CD8-positive, alpha-beta T cell (primary cell): ENCODE measurements at regions of chr1 and their contacts with region 1.

Region 1: DNA sequence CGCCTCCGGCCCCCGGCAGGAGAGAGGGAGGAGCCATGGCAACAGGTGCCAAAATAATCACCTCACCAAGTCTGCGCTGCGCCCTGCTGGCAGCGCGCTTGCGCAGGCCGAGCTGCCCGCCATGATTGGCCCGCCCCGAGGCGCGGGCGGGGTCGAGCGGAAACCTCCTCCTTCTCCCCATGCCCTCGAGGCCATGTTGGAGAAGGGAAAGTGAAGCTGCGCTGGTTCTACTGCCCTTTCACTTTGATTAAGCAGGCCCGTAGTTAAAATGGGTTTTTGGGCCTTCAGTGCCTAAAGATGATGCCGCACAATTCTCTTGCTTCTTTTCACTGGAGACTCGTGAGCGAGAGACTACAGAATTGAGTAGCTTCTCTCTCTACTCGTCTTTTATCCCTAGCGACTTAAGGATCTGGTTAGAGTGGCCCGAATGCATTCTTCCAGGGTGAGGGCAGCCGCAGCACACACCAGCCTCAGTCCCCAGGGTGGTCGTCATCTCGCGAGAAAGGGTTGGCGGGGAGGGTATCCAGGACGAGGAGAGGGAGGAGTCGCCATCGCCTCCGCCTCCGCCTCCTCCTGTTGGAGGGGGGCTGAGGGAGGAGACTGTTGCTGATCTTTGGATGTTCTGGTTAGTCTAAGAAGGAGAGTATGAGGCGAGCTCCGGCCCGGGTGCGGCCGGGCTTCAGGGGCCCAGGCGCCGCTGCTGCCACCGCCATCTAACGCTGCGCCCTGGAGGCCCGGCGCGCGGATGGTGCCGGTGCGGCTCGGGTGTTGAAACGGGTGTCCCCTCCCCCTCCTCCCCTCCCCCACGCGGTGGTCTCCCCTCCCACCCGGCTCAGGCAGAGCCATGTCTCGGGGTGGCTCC is at the start of gene DCAF6:
- DNase-seq: peak; percentile 93 to 100 (median 97)
- ATAC-seq: peak; percentile 78
- H3K4me3 ChIP-seq: peak within 1 kb of the TSS; percentile 85 to 86
- H3K4me3 Mint-ChIP-seq: peak within 1 kb of the TSS; percentile 89
- H3K27ac ChIP-seq: peak within 1 kb of the TSS; percentile 91 to 96
- H3K27ac Mint-ChIP-seq: peak within 1 kb of the TSS; percentile 93
- H3K4me1 ChIP-seq: peaks cover 29% of the 10 kb centered on the region
- H3K4me1 Mint-ChIP-seq: peaks cover 54% of the 10 kb centered on the region
- H3K27me3 ChIP-seq: no peaks in the 10 kb centered on the region
- H3K27me3 Mint-ChIP-seq: no peaks in the 10 kb centered on the region
- CTCF ChIP-seq: no peak
- total RNA-seq, gene DCAF6: 12.4 to 13.0 TPM

Region 2: GRCh38 chr1:166838766-166839599 is 1097.3 kb before region 1 on chr1 and contains the start of gene POGK:
- CTCF ChIA-PET with region 1: no interaction called
- POLR2A ChIA-PET with region 1: interaction called, 6 read pairs
- intact Hi-C with region 1: loop called in 1 of 2 experiments (anchors 2 kb)
- DNase-seq: peak; percentile 56 to 92 (median 80)
- ATAC-seq: peak; percentile 88
- H3K4me3 ChIP-seq: peak within 1 kb of the TSS; percentile 68 to 72
- H3K4me3 Mint-ChIP-seq: peak within 1 kb of the TSS; percentile 92
- H3K27ac ChIP-seq: peak within 1 kb of the TSS; percentile 71 to 75
- H3K27ac Mint-ChIP-seq: peak within 1 kb of the TSS; percentile 98
- H3K4me1 ChIP-seq: peaks cover 28% of the 10 kb centered on the region
- H3K4me1 Mint-ChIP-seq: peaks cover 41% of the 10 kb centered on the region
- H3K27me3 ChIP-seq: no peaks in the 10 kb centered on the region
- H3K27me3 Mint-ChIP-seq: no peaks in the 10 kb centered on the region
- CTCF ChIP-seq: no peak
- total RNA-seq, gene POGK: 14.9 to 16.1 TPM

Region 3: DNA sequence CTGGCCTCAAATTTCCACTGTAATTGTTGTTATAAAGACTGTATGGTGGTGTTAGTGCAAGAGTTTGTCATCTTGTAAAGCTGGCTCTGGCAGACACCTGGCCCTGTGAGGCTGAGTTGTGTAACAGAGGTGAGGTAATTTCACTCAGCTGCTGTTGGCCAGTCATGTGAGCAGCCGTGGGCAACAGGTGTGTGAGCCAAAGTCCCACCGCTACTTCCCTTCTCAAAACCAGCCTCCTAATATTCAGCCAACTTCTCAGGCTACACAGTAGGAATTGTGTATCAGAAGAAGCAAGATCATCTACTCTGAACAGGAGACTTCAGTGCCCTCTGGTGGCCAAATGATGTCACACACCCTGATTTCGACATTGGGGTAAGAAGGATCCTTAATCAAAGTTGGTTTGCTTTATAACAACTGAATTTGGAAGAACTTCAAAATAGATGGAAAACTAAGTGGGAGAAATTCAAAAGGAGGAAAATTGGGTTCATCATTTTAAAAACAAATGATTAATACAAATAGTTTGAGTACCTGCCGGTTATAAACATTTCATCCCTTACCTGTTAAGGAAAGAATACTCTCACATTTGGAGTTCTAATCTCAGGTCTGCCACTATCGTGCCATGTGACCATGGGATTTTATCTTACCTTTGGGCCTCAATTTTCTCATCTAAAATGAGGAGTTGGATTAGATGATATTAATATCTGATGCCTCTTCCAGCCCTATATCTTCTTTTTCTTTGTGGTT is 380.2 kb before region 1 on chr1:
- CTCF ChIA-PET with region 1: no interaction called
- POLR2A ChIA-PET with region 1: no interaction called
- intact Hi-C with region 1: no loop called
- DNase-seq: peak; percentile 53 to 84 (median 76)
- ATAC-seq: peak; percentile 37
- H3K4me3 ChIP-seq: no peak overlapping the region
- H3K4me3 Mint-ChIP-seq: no peak overlapping the region
- H3K27ac ChIP-seq: no peak overlapping the region
- H3K27ac Mint-ChIP-seq: no peak overlapping the region
- H3K4me1 ChIP-seq: peaks cover 18% of the 10 kb centered on the region
- H3K4me1 Mint-ChIP-seq: peaks cover 32% of the 10 kb centered on the region
- H3K27me3 ChIP-seq: no peaks in the 10 kb centered on the region
- H3K27me3 Mint-ChIP-seq: no peaks in the 10 kb centered on the region
- CTCF ChIP-seq: peak; percentile 96

Region 4: DNA sequence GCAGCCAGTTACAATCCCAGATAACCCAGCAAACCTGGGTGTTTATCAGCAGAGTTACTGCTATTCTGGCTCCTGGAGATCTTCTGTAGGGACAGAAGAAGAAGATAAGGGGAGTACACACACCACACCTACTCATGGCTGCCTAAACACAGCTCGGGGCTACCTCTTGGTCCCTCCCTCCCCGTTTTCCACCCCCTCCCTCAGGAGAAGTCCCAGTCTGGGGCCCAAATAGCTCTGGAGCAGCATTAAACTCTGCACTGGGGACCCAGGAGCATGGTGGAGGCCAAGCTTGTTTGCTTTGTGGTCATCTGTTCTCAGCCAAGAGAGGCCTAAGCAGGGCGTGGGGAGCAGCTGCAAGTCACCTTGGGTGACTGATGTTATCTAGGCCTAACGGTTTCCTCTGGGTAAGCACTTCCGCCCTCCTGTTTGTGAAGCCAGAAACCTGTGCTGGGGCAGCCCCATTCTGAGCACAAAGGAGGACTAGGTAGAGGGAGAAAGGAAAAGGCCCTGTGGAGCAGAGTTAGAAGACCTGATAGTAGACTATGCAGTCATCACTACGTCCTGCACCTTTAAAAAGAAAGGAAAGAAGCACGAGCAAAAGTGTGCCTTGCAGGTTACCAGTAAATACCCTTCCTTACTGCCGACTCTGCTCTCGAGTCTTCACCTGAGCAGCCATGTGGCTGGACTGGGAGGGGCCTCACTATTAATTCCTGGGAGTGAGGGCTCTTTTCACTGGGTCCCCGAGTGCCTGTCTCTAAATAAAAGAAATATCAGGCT is 308.2 kb before region 1 on chr1:
- CTCF ChIA-PET with region 1: no interaction called
- POLR2A ChIA-PET with region 1: no interaction called
- intact Hi-C with region 1: loop called in 1 of 2 experiments (anchors 10 kb)
- DNase-seq: peak; percentile 44 to 91 (median 73)
- ATAC-seq: peak; percentile 67
- H3K4me3 ChIP-seq: peak overlapping the region; percentile 28 to 96
- H3K4me3 Mint-ChIP-seq: peak overlapping the region; percentile 89
- H3K27ac ChIP-seq: peak overlapping the region; percentile 46 to 94
- H3K27ac Mint-ChIP-seq: peak overlapping the region; percentile 96
- H3K4me1 ChIP-seq: peaks cover 50% of the 10 kb centered on the region
- H3K4me1 Mint-ChIP-seq: peaks cover 63% of the 10 kb centered on the region
- H3K27me3 ChIP-seq: no peaks in the 10 kb centered on the region
- H3K27me3 Mint-ChIP-seq: no peaks in the 10 kb centered on the region
- CTCF ChIP-seq: no peak

Region 5: GRCh38 chr1:167803358-167804207 is 132.7 kb before region 1 on chr1:
- CTCF ChIA-PET with region 1: interaction called, 3 read pairs
- POLR2A ChIA-PET with region 1: no interaction called
- intact Hi-C with region 1: loop called in 1 of 2 experiments (anchors 10 kb)
- DNase-seq: peak; percentile 58 to 89 (median 86)
- ATAC-seq: peak; percentile 81
- H3K4me3 ChIP-seq: no peak overlapping the region
- H3K4me3 Mint-ChIP-seq: peak overlapping the region; percentile 58
- H3K27ac ChIP-seq: no peak overlapping the region
- H3K27ac Mint-ChIP-seq: peak overlapping the region; percentile 47
- H3K4me1 ChIP-seq: peaks cover 21% of the 10 kb centered on the region
- H3K4me1 Mint-ChIP-seq: peaks cover 24% of the 10 kb centered on the region
- H3K27me3 ChIP-seq: no peaks in the 10 kb centered on the region
- H3K27me3 Mint-ChIP-seq: no peaks in the 10 kb centered on the region
- CTCF ChIP-seq: peak; percentile 86

Region 6: DNA sequence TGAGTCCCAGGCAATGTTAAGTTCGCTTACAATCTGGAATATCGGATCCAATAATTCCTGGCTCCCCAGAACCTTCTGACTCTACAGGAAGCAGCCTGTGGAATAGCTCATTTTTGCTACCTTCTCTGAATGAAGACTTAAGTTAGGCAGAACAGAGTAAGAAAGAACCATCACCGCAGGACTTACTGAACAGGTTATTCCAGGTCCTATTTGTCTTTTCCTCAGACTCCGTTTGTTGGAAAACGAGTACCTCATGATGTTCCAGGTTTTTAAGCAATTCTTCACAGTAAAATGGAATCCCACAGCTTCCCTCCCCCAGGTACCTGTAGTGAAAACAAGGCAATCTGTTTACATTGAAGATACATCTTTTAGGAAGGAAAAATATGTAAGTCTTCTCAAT is 82.1 kb before region 1 on chr1:
- CTCF ChIA-PET with region 1: no interaction called
- POLR2A ChIA-PET with region 1: no interaction called
- intact Hi-C with region 1: no loop called
- DNase-seq: no peak
- ATAC-seq: no peak
- H3K4me3 ChIP-seq: no peak overlapping the region
- H3K4me3 Mint-ChIP-seq: no peak overlapping the region
- H3K27ac ChIP-seq: no peak overlapping the region
- H3K27ac Mint-ChIP-seq: no peak overlapping the region
- H3K4me1 ChIP-seq: no peaks in the 10 kb centered on the region
- H3K4me1 Mint-ChIP-seq: no peaks in the 10 kb centered on the region
- H3K27me3 ChIP-seq: no peaks in the 10 kb centered on the region
- H3K27me3 Mint-ChIP-seq: no peaks in the 10 kb centered on the region
- CTCF ChIP-seq: no peak

Region 7: DNA sequence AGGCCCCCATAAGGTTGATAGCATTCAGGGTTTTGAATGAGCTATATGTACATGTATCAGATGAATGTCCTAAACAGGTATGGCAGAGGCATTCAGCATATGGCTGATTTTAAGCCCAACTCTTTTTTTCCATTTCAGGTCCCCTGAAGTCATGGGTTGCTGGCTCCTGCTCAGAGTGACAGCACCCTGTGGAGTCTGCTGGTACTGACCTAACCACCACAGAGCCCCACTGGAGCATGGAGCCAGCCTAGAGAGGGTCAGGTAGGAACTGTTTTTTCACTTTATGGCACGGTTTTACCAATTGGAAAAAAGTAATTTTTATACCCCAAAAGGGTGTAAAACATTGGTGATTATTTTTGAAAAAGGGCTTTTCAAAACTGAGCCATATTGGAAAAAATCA is 83.1 kb after region 1 on chr1:
- CTCF ChIA-PET with region 1: no interaction called
- POLR2A ChIA-PET with region 1: no interaction called
- intact Hi-C with region 1: no loop called
- DNase-seq: no peak
- ATAC-seq: no peak
- H3K4me3 ChIP-seq: no peak overlapping the region
- H3K4me3 Mint-ChIP-seq: no peak overlapping the region
- H3K27ac ChIP-seq: no peak overlapping the region
- H3K27ac Mint-ChIP-seq: no peak overlapping the region
- H3K4me1 ChIP-seq: no peaks in the 10 kb centered on the region
- H3K4me1 Mint-ChIP-seq: no peaks in the 10 kb centered on the region
- H3K27me3 ChIP-seq: no peaks in the 10 kb centered on the region
- H3K27me3 Mint-ChIP-seq: no peaks in the 10 kb centered on the region
- CTCF ChIP-seq: no peak

Region 8: DNA sequence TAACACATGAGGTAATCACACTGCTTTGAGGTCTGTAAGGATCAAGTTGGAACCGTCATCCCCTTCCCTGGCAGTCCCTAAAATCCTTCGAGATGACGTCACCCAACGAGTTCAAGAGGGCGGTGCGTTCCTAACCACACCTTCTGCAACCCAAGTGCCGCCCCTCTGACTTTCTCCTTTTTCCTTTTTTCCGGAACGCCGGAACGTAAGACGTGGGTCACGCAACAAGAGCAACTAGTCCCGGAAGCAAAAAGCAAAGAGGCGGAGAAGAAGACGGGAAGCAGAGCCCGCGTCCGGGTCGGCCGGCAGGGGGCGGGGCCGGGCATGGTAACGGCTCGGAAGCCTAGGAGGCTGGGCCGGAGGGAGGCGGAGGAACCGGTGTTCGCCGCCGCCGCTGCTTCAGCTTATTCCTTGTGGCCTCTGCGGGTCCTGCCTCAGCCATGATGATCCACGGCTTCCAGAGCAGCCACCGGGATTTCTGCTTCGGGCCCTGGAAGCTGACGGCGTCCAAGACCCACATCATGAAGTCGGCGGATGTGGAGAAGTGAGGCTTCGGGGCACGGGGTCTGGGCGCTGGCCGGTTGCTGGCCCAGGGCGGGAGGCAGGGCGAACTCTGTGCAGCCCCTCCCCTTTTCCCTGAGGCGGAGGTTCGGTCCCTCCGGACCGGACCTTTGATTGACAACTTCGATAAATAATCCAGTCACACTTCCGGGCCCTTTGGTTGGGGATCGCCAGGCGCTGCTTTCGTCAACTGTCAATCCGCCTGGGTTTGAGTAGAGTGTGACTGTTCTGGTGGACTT is 242.5 kb after region 1 on chr1 and contains the start of gene TIPRL:
- CTCF ChIA-PET with region 1: no interaction called
- POLR2A ChIA-PET with region 1: interaction called, 3 read pairs
- intact Hi-C with region 1: loop called in 1 of 2 experiments (anchors 1 kb)
- DNase-seq: peak; percentile 84 to 97 (median 93)
- ATAC-seq: peak; percentile 86
- H3K4me3 ChIP-seq: peak within 1 kb of the TSS; percentile 98 to 100
- H3K4me3 Mint-ChIP-seq: no peak within 1 kb of the TSS
- H3K27ac ChIP-seq: peak within 1 kb of the TSS; percentile 95 to 97
- H3K27ac Mint-ChIP-seq: no peak within 1 kb of the TSS
- H3K4me1 ChIP-seq: peaks cover 15% of the 10 kb centered on the region
- H3K4me1 Mint-ChIP-seq: peaks cover 12% of the 10 kb centered on the region
- H3K27me3 ChIP-seq: no peaks in the 10 kb centered on the region
- H3K27me3 Mint-ChIP-seq: peaks cover 7% of the 10 kb centered on the region
- CTCF ChIP-seq: peak; percentile 49
- total RNA-seq, gene TIPRL: 15.0 to 18.3 TPM

Region 9: GRCh38 chr1:169367486-169368405 is 1431.4 kb after region 1 on chr1 and contains the starts of genes BLZF1 and NME7:
- CTCF ChIA-PET with region 1: no interaction called
- POLR2A ChIA-PET with region 1: no interaction called
- intact Hi-C with region 1: loop called in 1 of 2 experiments (anchors 5 kb)
- DNase-seq: peak; percentile 96 to 99 (median 98)
- ATAC-seq: peak; percentile 93
- H3K4me3 ChIP-seq: peak within 1 kb of the TSS; percentile 84 to 94
- H3K4me3 Mint-ChIP-seq: peak within 1 kb of the TSS; percentile 51
- H3K27ac ChIP-seq: peak within 1 kb of the TSS; percentile 88 to 97
- H3K27ac Mint-ChIP-seq: peak within 1 kb of the TSS; percentile 32
- H3K4me1 ChIP-seq: peaks cover 23% of the 10 kb centered on the region
- H3K4me1 Mint-ChIP-seq: peaks cover 49% of the 10 kb centered on the region
- H3K27me3 ChIP-seq: no peaks in the 10 kb centered on the region
- H3K27me3 Mint-ChIP-seq: no peaks in the 10 kb centered on the region
- CTCF ChIP-seq: no peak
- total RNA-seq, gene BLZF1: 11.1 to 13.6 TPM
- total RNA-seq, gene NME7: 5.3 to 7.7 TPM